PC-9 (cell line): ENCODE measurements at regions of chr9 and their contacts with region 1.

Region 1: DNA sequence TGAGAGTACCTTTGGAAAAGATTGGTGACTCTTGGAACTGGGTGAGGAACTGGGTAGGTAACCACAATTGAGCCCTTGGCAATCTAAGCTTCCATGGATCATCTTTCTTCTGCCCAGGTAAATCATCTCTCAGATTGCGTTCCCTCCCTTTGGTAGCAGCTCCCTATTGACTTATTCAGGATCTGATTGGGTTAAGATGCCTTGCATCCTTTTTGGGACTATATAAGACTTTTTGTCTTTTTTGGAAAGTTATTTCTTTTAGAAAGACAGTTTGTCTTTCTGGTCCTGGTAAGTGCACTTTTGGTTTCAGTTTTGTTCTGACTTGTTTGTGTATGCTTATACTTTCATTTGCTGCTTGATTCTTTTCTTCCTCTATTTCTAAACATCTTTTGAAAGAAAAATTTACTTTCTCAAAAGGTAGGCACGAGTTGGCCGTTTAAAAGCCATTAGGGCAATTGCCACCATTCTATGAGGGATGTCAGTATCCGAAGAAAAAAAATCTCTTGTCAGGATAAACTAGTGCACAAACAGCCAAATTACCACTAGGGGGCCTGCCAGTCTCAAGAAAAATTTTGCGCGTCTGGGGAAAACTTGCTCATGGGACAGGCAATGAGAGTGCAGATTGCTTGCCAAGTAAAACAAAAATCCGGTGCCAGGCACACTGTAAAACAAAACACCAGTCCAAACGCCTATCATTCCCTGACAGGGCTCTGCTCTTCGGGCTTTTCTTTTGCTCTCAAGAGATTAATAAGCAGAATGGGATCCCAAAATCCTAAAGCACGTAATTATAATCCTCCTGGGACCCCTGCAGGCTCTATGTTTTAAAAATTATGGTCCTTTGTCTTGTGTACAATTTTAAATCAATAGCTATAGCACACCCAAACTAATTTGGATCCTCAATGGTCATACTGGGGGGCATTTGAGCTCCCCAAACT is 12.8 kb downstream of the OR1J1 start:
- DNase-seq: peak; percentile 50 to 74
- H3K4me3 ChIP-seq: peak overlapping the region; percentile 51; the same call in 1 of the 2 replicates
- H3K27ac ChIP-seq: no peak overlapping the region
- H3K4me1 ChIP-seq: no peaks in the 10 kb centered on the region
- H3K27me3 ChIP-seq: peaks cover 21% of the 10 kb centered on the region; the same call in 1 of the 2 replicates
- CTCF ChIP-seq: peak; percentile 89

Region 2: GRCh38 chr9:122370869-122371755 is 93.8 kb before region 1 on chr9 and contains the start of gene PTGS1:
- CTCF ChIA-PET with region 1: no interaction called
- POLR2A ChIA-PET with region 1: interaction called, 15 read pairs
- intact Hi-C with region 1: no loop called
- DNase-seq: peak in 1 of 2 experiments; percentile 43
- H3K4me3 ChIP-seq: no peak within 1 kb of the TSS
- H3K27ac ChIP-seq: no peak within 1 kb of the TSS
- H3K4me1 ChIP-seq: 0 out of 2 replicates have a peak, but pooled peaks cover 6% of the 10 kb centered on the region
- H3K27me3 ChIP-seq: peaks cover 25% of the 10 kb centered on the region; the same call in 1 of the 2 replicates
- CTCF ChIP-seq: no peak
- total RNA-seq, gene PTGS1: 1.8 TPM in 2 replicates

Region 3: DNA sequence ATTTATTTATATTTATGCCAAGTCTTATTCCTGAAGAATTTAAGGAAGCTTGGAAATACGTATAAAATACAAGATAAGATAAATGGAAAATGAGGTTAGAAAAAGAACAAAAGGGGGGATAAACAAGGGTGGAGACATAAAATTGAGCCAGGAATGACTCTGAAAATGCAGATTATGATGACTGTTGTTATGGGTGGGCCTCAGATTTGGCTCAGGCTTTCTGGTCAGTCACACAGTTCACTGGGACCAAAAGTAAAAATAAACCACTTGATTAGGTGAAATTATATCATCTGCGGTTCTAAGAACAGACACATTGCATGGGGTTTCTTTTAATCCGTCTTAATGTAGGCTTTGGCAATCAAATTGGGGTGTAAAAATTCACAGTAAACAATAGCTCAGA is 38.2 kb before region 1 on chr9:
- CTCF ChIA-PET with region 1: no interaction called
- POLR2A ChIA-PET with region 1: no interaction called
- intact Hi-C with region 1: no loop called
- DNase-seq: no peak
- H3K4me3 ChIP-seq: no peak overlapping the region
- H3K27ac ChIP-seq: no peak overlapping the region
- H3K4me1 ChIP-seq: no peaks in the 10 kb centered on the region
- H3K27me3 ChIP-seq: 0 out of 2 replicates have a peak, but pooled peaks cover 9% of the 10 kb centered on the region
- CTCF ChIP-seq: no peak

Region 4: GRCh38 chr9:122642226-122642625 is 177.3 kb after region 1 on chr9:
- CTCF ChIA-PET with region 1: no interaction called
- POLR2A ChIA-PET with region 1: no interaction called
- intact Hi-C with region 1: no loop called
- DNase-seq: no peak
- H3K4me3 ChIP-seq: no peak overlapping the region
- H3K27ac ChIP-seq: no peak overlapping the region
- H3K4me1 ChIP-seq: no peaks in the 10 kb centered on the region
- H3K27me3 ChIP-seq: no peaks in the 10 kb centered on the region
- CTCF ChIP-seq: no peak